ENCODE measurements at regions of chr19 and their contacts with region 1.

Region 1: DNA sequence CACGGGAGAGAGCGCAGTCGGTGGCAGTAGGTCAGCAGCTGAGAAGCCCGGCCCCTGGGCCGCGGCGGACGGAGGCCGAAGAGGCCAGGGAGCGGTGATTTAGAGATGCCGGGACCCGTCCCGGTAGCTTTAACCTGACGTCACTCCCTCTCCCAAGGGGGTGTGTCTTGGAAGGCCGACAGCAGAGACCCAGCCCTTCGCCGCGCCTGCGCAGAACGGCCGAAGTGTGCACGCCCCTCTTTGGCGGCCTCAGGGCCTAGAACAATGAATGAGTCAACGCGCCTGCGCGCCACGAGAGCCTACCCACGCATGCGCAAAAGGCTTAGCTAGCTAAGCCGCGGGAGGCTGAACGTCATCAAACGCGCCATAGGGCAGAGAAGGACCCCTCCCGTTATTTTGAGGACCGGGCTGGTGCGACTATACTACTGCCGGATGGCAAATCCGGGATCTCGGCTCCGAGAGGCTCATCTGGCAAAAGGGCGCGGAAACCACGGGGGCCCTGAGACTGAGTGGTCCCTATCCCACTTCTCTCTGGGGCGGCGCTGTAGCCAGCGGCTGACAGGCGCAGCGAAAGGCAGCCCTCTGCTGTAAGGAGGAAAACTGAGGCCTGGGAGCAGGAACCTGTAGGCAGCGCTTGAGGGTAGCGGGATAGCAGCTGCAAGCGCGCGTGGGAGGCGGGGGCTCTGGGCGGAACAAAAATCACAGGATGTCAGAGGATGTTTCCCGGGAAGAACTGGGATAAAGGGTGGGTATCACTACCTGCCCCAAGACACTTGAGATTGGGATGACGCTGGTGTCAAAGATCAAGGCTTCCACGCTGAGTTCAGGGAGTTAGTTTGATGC is at the starts of genes IRGQ and ZNF576:
- DNase-seq: peak; percentile 99
- ATAC-seq: peak; percentile 83
- H3K4me3 Mint-ChIP-seq: peak within 1 kb of the TSS; percentile 98
- H3K27ac Mint-ChIP-seq: peak within 1 kb of the TSS; percentile 98
- H3K4me1 Mint-ChIP-seq: peaks cover 42% of the 10 kb centered on the region
- H3K27me3 Mint-ChIP-seq: no peaks in the 10 kb centered on the region
- CTCF ChIP-seq: no peak
- total RNA-seq, gene IRGQ: 13.1 and 14.1 TPM in 2 replicates
- total RNA-seq, gene ZNF576: 14.5 and 17.3 TPM in 2 replicates

Region 2: DNA sequence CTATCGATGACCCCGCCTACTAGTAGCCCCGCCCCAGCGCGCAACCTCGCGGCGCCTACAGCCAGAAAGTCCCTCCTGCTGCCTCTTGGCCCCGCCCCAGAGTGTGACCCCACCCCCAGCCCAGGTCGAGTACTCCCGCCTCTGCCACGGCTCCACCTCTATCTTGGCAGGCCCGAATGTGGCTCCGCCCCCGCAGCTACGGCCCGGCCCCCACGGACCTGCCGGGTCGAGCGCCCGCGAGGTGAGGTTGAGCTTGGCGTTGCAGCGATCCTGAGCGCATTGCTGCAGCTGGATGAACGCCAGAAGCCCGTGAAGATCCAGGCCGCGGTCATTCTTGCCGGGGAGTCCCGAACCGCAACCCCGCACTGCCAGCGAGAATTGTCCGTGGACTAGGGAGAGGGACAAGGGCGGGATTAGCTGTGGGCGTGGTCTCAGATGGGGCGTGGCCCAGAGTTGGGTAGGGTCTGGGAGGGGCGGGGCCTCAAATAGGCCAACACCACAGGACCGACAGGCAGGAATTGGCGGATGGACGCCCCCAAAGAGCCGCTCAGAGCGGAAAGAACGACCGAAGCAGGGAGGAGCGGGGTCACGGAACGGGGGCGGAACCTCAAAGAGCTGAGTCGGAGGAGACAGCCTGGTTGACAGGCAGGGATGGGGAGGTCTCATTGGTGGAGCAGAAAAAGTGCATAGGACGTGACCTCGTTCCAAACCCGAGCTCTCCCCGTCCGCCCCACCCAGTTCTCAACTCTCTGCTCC is 132.7 kb before region 1 on chr19:
- CTCF ChIA-PET with region 1: interaction called, 3 read pairs
- POLR2A ChIA-PET with region 1: interaction called, 5 read pairs
- intact Hi-C with region 1: loop called (anchors 1 kb)
- DNase-seq: peak; percentile 95
- ATAC-seq: peak; percentile 94
- H3K4me3 Mint-ChIP-seq: peak overlapping the region; percentile 92
- H3K27ac Mint-ChIP-seq: peak overlapping the region; percentile 88
- H3K4me1 Mint-ChIP-seq: peaks cover 17% of the 10 kb centered on the region
- H3K27me3 Mint-ChIP-seq: peaks cover 10% of the 10 kb centered on the region
- CTCF ChIP-seq: no peak

Region 3: DNA sequence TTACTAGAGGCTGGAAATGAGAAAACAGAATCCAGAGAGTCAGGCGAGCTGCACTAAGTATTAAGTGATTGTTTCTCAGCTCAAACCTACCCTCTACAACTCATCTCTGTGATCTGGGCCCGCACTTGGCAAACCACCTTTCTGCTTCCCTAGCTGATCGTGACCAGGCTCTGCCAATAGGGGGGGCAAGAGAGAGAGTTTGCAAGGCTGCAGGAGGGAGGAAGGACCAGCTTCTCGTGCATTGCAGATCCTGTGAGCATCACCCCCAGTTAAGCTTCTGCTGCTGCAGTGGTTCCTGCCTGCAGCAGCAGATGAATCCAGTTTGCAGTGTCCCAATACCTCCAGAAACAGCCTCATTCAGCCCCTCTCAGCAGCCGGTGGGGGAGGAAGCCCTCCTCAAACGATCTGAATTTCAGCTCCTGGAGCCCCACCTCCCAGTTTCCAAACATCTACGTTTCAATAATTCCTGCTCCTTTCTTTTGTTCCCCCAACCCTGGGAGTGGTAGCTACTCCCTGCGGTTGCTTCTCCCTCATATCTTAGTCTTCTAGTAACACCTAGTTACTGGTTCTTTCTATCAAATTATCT is 40.9 kb before region 1 on chr19:
- CTCF ChIA-PET with region 1: interaction called, 92 read pairs
- POLR2A ChIA-PET with region 1: interaction called, 10 read pairs
- intact Hi-C with region 1: loop called (anchors 1 kb)
- DNase-seq: peak; percentile 55
- ATAC-seq: peak; percentile 98
- H3K4me3 Mint-ChIP-seq: no peak overlapping the region
- H3K27ac Mint-ChIP-seq: no peak overlapping the region
- H3K4me1 Mint-ChIP-seq: peaks cover 13% of the 10 kb centered on the region
- H3K27me3 Mint-ChIP-seq: no peaks in the 10 kb centered on the region
- CTCF ChIP-seq: no peak

Region 4: DNA sequence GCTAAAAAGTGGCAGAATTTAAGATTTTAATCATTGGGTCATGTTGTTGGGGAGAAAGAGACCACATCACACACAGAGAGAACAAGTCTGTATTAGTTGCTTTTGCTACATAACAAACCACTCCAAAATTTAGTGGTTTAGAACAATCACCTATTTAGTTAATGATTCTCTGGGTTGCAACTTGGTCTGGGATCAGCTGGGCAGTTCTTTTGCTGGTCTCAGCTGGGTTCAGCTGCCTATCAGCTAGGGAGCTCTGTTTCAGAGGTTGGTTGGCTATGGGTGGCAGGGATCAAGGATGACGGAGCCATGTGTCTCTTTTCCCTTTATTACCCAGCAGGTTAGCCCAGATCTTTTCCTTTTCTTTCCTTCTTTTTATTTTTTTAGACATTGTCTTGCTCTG is 11.7 kb before region 1 on chr19:
- CTCF ChIA-PET with region 1: interaction called, 17 read pairs
- POLR2A ChIA-PET with region 1: interaction called, 6 read pairs
- intact Hi-C with region 1: no loop called
- DNase-seq: no peak
- ATAC-seq: no peak
- H3K4me3 Mint-ChIP-seq: peak overlapping the region; percentile 9
- H3K27ac Mint-ChIP-seq: peak overlapping the region; percentile 79
- H3K4me1 Mint-ChIP-seq: peaks cover 61% of the 10 kb centered on the region
- H3K27me3 Mint-ChIP-seq: no peaks in the 10 kb centered on the region
- CTCF ChIP-seq: no peak

Region 5: DNA sequence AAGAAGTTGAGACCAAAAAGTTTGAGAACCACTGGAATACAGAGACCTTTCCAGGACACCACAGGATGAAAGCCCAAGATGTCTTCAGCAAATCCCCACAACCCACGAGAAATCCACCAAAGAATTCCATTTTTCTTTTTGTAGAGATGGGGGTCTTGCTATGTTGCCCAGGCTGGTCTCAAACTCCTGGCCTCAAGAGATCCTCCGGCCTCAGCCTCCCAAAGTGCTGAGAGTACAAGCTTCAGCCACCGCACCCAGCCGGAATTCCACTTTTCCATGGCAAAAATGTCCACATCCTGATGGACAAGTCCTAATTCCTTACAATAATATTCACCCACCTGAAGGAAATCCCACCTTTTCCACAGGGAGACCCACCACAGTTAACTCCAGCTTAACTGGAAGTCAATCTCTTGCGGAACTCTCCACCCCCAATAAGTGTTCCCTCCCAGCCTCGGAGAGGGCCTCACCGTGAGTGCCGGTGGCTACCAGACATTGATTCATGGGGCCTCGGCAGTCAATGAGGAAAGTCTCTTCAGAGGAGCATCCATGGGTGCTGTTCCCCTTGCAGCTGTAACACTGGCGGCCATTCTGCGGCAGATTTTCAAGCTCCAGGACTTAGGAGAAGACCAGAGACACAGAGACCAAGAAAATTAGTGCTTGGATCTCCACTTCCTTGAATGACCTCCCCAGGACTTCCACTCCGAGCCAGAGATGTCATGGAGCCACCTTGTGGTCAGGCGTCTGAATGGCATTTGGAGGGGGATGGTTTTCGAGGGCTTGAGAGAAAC is 55.7 kb after region 1 on chr19:
- CTCF ChIA-PET with region 1: no interaction called
- POLR2A ChIA-PET with region 1: no interaction called
- intact Hi-C with region 1: loop called (anchors 1 kb)
- DNase-seq: no peak
- ATAC-seq: peak; percentile 57
- H3K4me3 Mint-ChIP-seq: no peak overlapping the region
- H3K27ac Mint-ChIP-seq: no peak overlapping the region
- H3K4me1 Mint-ChIP-seq: no peaks in the 10 kb centered on the region
- H3K27me3 Mint-ChIP-seq: peaks cover 3% of the 10 kb centered on the region
- CTCF ChIP-seq: peak; percentile 32

Region 6: GRCh38 chr19:43784981-43785808 is 189.0 kb after region 1 on chr19:
- CTCF ChIA-PET with region 1: interaction called, 3 read pairs
- POLR2A ChIA-PET with region 1: interaction called, 4 read pairs
- intact Hi-C with region 1: loop called (anchors 10 kb)
- DNase-seq: no peak
- ATAC-seq: peak; percentile 13
- H3K4me3 Mint-ChIP-seq: peak overlapping the region; percentile 48
- H3K27ac Mint-ChIP-seq: peak overlapping the region; percentile 94
- H3K4me1 Mint-ChIP-seq: peaks cover 44% of the 10 kb centered on the region
- H3K27me3 Mint-ChIP-seq: no peaks in the 10 kb centered on the region
- CTCF ChIP-seq: peak; percentile 92

Measured in activated B cell treated with CpG ODN at 0.5 μM for 24 hours (primary cell).